Activated CD4-positive, alpha-beta T cell treated with anti-CD3 and anti-CD28 coated beads for 36 hours (primary cell): ENCODE measurements at regions of chr6 and their contacts with region 1.

Region 1: GRCh38 chr6:108113557-108114519 is 39.3 kb upstream of the OSTM1 start:
- DNase-seq: peak; percentile 37
- ATAC-seq: no peak
- H3K4me3 Mint-ChIP-seq: peak overlapping the region; percentile 62
- H3K27ac Mint-ChIP-seq: no peak overlapping the region
- H3K4me1 Mint-ChIP-seq: peaks cover 42% of the 10 kb centered on the region
- H3K27me3 Mint-ChIP-seq: peaks cover 68% of the 10 kb centered on the region

Region 2: DNA sequence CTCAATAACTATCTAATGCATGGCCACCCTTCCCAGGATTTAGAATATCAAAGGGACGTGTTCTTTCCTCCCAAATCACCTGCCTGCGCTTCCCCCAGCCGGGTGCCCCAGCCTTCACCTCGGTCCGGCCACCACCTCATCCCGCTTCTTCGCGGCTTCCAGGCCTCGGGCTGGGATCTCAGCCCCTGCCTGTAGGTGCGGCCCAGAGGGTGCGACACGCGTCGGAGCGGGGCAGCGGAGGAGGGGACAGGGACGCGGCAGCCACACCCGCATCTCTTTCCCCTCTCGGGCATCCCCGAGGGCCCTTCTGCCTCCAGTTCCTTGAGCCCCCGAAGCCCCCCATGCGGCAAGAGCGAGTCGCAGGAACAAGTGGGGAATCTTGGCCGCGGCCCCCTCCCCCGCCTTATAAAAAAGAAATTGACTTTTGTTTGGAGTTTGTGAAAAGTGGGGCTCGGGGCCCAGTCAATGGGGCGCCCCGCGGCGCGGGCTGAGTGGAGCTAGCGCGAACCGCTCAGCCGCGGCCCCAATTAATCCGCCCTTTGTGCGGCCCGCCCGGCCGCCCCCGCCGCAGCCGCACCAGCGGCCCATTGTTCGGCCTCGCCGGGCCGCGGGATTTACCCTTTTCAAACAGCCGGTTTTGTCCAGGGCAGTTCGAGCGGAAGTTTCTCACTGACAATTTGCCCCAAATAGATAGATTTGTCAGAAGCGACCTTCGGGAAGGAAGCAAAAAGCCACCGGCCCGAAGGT is 43.6 kb after region 1 on chr6:
- CTCF ChIA-PET with region 1: interaction called, 3 read pairs
- POLR2A ChIA-PET with region 1: no interaction called
- intact Hi-C with region 1: loop called in 1 of 2 experiments (anchors 2 kb)
- DNase-seq: no peak
- ATAC-seq: no peak
- H3K4me3 Mint-ChIP-seq: no peak overlapping the region
- H3K27ac Mint-ChIP-seq: no peak overlapping the region
- H3K4me1 Mint-ChIP-seq: peaks cover 13% of the 10 kb centered on the region
- H3K27me3 Mint-ChIP-seq: peaks cover 69% of the 10 kb centered on the region

Region 3: GRCh38 chr6:108168501-108169463 is 54.9 kb after region 1 on chr6:
- CTCF ChIA-PET with region 1: interaction called, 8 read pairs
- POLR2A ChIA-PET with region 1: interaction called, 3 read pairs
- intact Hi-C with region 1: loop called (anchors 1 to 2 kb)
- DNase-seq: peak; percentile 46
- ATAC-seq: peak; percentile 54
- H3K4me3 Mint-ChIP-seq: peak overlapping the region; percentile 49
- H3K27ac Mint-ChIP-seq: no peak overlapping the region
- H3K4me1 Mint-ChIP-seq: peaks cover 40% of the 10 kb centered on the region
- H3K27me3 Mint-ChIP-seq: peaks cover 81% of the 10 kb centered on the region

Region 4: DNA sequence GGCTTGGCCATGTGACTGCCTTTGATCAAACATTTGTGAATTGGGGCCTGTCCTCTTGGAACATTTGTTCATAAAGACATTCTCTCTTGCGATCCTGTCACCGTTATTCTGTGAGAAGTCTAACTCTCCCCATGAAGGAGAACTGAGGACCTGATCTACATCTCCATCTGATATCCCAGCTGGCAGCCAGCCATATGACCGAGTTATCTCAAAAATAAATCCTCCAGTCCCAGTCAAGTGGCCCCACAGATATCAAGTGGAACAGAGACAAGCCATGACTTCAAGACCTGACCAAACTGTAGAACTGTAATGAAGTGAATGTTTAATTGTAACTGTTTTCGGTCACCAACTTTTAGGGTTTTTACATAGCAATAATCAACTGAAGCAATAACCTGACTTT is 121.3 kb after region 1 on chr6:
- CTCF ChIA-PET with region 1: no interaction called
- POLR2A ChIA-PET with region 1: no interaction called
- intact Hi-C with region 1: no loop called
- DNase-seq: no peak
- ATAC-seq: no peak
- H3K4me3 Mint-ChIP-seq: no peak overlapping the region
- H3K27ac Mint-ChIP-seq: no peak overlapping the region
- H3K4me1 Mint-ChIP-seq: peaks cover 5% of the 10 kb centered on the region
- H3K27me3 Mint-ChIP-seq: no peaks in the 10 kb centered on the region

Region 5: GRCh38 chr6:108359901-108360882 is 246.4 kb after region 1 on chr6:
- CTCF ChIA-PET with region 1: no interaction called
- POLR2A ChIA-PET with region 1: no interaction called
- intact Hi-C with region 1: loop called in 1 of 2 experiments (anchors 10 kb)
- DNase-seq: no peak
- ATAC-seq: no peak
- H3K4me3 Mint-ChIP-seq: no peak overlapping the region
- H3K27ac Mint-ChIP-seq: no peak overlapping the region
- H3K4me1 Mint-ChIP-seq: no peaks in the 10 kb centered on the region
- H3K27me3 Mint-ChIP-seq: no peaks in the 10 kb centered on the region

Region 6: DNA sequence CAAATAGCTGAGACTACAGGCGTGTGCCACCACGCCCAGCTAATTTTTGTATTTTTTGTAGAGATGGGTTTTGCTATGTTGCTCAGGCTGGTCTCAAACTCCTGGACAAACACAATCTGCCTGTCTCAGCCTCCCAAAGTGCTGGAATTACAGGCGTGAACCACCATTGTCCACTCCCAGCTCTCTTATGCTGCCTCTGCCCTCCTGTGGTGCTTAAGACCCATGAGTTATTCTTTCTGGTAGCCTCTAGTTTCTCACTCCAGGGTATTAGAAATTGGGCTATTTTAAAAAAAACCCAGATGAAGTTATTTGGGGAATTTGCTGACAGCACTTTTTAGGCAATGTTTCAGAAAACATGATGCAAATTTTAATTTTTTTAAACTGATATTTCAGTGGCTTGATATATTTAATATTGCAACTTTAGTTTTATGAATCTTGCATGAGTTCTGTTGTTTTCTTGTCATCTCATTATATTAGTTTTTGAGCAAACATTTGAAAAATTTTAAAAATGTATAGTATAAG is 332.9 kb after region 1 on chr6:
- CTCF ChIA-PET with region 1: no interaction called
- POLR2A ChIA-PET with region 1: interaction called, 3 read pairs
- intact Hi-C with region 1: loop called in 1 of 2 experiments (anchors 5 kb)
- DNase-seq: no peak
- ATAC-seq: no peak
- H3K4me3 Mint-ChIP-seq: no peak overlapping the region
- H3K27ac Mint-ChIP-seq: no peak overlapping the region
- H3K4me1 Mint-ChIP-seq: peaks cover 23% of the 10 kb centered on the region
- H3K27me3 Mint-ChIP-seq: peaks cover 30% of the 10 kb centered on the region

Region 7: GRCh38 chr6:108492131-108492766 is 378.4 kb after region 1 on chr6:
- CTCF ChIA-PET with region 1: interaction called, 30 read pairs
- POLR2A ChIA-PET with region 1: no interaction called
- intact Hi-C with region 1: loop called (anchors 1 to 2 kb)
- DNase-seq: no peak
- ATAC-seq: peak; percentile 44
- H3K4me3 Mint-ChIP-seq: no peak overlapping the region
- H3K27ac Mint-ChIP-seq: no peak overlapping the region
- H3K4me1 Mint-ChIP-seq: no peaks in the 10 kb centered on the region
- H3K27me3 Mint-ChIP-seq: no peaks in the 10 kb centered on the region

Region 8: GRCh38 chr6:108526739-108527174 is 412.9 kb after region 1 on chr6:
- CTCF ChIA-PET with region 1: interaction called, 12 read pairs
- POLR2A ChIA-PET with region 1: no interaction called
- intact Hi-C with region 1: loop called (anchors 1 kb)
- DNase-seq: no peak
- ATAC-seq: no peak
- H3K4me3 Mint-ChIP-seq: no peak overlapping the region
- H3K27ac Mint-ChIP-seq: no peak overlapping the region
- H3K4me1 Mint-ChIP-seq: no peaks in the 10 kb centered on the region
- H3K27me3 Mint-ChIP-seq: no peaks in the 10 kb centered on the region

Region 9: DNA sequence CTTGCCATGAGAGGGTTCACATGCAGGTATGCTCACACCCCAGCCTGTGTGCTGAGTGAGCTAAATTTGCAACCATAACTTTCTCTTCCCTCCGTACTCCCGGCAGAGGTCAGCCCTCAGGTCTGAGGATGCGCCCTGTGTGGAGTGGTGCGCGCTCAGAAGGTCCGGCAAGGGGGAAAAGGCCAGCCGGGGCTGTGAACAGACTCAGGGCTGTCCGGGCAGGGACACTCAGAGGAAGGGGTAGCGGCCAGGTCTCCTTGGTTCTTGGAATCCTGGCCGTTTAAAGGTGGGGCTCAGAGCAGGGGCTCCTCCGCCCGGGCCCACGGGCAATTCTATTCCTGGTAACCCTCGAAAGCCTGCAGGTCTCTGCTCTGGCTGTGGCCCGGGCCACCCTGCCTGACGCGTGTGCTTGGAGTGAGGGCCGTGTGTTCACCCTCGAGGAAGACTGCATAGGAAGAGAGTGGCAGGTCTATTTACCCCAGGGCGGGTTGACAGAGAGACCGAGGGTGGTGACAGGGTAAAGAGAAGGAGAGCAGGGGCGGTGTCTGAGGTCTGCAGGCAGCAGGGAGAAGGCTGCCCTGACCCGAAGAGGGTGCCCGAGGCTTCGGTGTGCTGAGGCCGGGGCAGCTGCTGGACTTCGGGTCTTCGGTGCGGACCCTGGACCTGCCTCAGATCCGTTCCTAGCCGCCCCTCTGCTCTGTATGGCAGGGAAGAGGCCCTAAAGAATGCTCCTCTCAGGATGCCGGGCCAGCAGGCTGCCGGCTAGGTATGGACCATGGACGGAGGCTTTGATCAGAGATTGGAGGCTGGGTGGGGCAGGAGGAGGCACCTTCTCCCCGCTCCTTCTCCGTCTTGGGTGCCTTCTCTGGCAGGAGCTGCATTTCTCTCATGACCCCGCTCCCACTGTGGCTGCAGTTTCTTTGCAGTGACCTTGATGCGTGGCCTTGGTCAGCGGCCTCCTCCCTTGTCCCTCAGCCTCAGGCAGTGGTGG is 603.3 kb after region 1 on chr6:
- CTCF ChIA-PET with region 1: no interaction called
- POLR2A ChIA-PET with region 1: no interaction called
- intact Hi-C with region 1: no loop called
- DNase-seq: no peak
- ATAC-seq: no peak
- H3K4me3 Mint-ChIP-seq: no peak overlapping the region
- H3K27ac Mint-ChIP-seq: no peak overlapping the region
- H3K4me1 Mint-ChIP-seq: peaks cover 15% of the 10 kb centered on the region
- H3K27me3 Mint-ChIP-seq: peaks cover 6% of the 10 kb centered on the region